CD14-positive monocyte (primary cell): ENCODE measurements at regions of chr20 and their contacts with region 1.

Region 1: GRCh38 chr20:62121776-62122631 is at the start of gene LSM14B:
- DNase-seq: peak; percentile 94 to 97 (median 96)
- H3K4me3 ChIP-seq: peak within 1 kb of the TSS; percentile 52 to 87 (median 71)
- H3K4me3 Mint-ChIP-seq: peak within 1 kb of the TSS; percentile 85 to 93
- H3K27ac ChIP-seq: peak within 1 kb of the TSS; percentile 65 to 94
- H3K27ac Mint-ChIP-seq: peak within 1 kb of the TSS; percentile 88 to 95 (median 93)
- H3K4me1 ChIP-seq: peaks cover 17 to 27% of the 10 kb centered on the region in 2 donors
- H3K4me1 Mint-ChIP-seq: peaks cover 19% of the 10 kb centered on the region
- H3K27me3 ChIP-seq: peaks cover 0 to 5% of the 10 kb centered on the region in 2 donors
- H3K27me3 Mint-ChIP-seq: peaks cover 9 to 24% (median 18%) of the 10 kb centered on the region in 3 donors
- CTCF ChIP-seq: no peak
- polyA plus RNA-seq, gene LSM14B: 1.0 to 33.5 (median 1.4) TPM

Region 2: GRCh38 chr20:62065669-62066338 is 56.2 kb before region 1 on chr20 and contains the start of gene TAF4:
- intact Hi-C with region 1: loop called (anchors 1 kb)
- DNase-seq: peak; percentile 68 to 84 (median 79)
- H3K4me3 ChIP-seq: peak within 1 kb of the TSS; percentile 62 to 89 (median 89)
- H3K4me3 Mint-ChIP-seq: peak within 1 kb of the TSS; percentile 87 to 96
- H3K27ac ChIP-seq: peak within 1 kb of the TSS in 1 of 2 donors; percentile 68
- H3K27ac Mint-ChIP-seq: peak within 1 kb of the TSS in 6 of 7 donors; percentile 53 to 90 (median 80)
- H3K4me1 ChIP-seq: peaks cover 44 to 53% of the 10 kb centered on the region in 2 donors
- H3K4me1 Mint-ChIP-seq: peaks cover 49% of the 10 kb centered on the region
- H3K27me3 ChIP-seq: no peaks in the 10 kb centered on the region
- H3K27me3 Mint-ChIP-seq: peaks cover 4 to 21% (median 4%) of the 10 kb centered on the region in 3 donors
- CTCF ChIP-seq: no peak
- polyA plus RNA-seq, gene TAF4: 0.48 to 14.9 (median 0.99) TPM

Region 3: DNA sequence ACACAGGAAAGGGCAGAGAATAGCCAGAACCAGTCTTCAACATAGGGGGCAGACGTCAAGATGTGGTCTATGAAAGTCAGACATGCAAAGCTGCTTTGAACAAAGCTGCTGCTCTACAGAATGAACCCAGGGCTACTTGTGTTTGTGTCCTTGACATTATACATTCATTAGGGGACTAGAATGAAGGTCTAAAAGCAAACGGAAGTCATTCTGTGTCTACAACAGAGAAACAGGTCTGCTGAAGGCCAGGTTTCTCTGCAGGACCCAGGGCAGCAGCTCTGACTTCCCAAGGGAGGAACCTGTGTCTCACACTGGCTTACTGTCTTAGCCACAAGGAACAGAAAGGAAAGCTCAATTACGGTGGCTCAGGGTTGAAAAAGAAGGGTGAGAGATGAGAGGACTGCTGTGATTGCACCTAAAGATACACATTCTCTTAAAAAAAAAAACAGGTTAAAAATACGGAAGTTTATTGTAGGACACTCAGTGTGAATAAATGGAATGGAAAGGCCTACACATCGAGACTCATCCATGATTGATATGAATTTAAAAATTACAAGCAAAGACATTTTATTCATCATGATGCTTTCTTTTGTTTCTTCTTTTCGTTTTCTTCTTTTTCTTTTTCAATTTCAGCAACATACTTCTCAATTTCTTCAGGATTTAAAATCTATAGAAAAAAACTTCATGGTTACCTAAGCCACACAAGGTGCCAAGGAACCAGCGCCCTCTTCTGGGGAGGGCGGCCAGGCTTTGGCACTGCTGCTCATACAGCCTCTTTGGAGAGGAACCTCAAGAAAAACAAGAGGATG is 14.5 kb after region 1 on chr20:
- intact Hi-C with region 1: loop called (anchors 2 kb)
- DNase-seq: peak; percentile 57 to 66 (median 60)
- H3K4me3 ChIP-seq: no peak overlapping the region
- H3K4me3 Mint-ChIP-seq: no peak overlapping the region
- H3K27ac ChIP-seq: peak overlapping the region in 1 of 2 donors; percentile 80
- H3K27ac Mint-ChIP-seq: peak overlapping the region; percentile 51 to 85 (median 65)
- H3K4me1 ChIP-seq: peaks cover 48 to 53% of the 10 kb centered on the region in 2 donors
- H3K4me1 Mint-ChIP-seq: peaks cover 55% of the 10 kb centered on the region
- H3K27me3 ChIP-seq: no peaks in the 10 kb centered on the region
- H3K27me3 Mint-ChIP-seq: no peaks in the 10 kb centered on the region
- CTCF ChIP-seq: peak; percentile 78

Region 4: GRCh38 chr20:62182613-62183425 is 60.8 kb after region 1 on chr20 and contains the start of gene MTG2:
- intact Hi-C with region 1: loop called in 1 of 2 experiments (anchors 5 kb)
- DNase-seq: peak; percentile 96 to 97 (median 96)
- H3K4me3 ChIP-seq: peak within 1 kb of the TSS; percentile 77 to 99 (median 84)
- H3K4me3 Mint-ChIP-seq: peak within 1 kb of the TSS; percentile 87 to 91
- H3K27ac ChIP-seq: peak within 1 kb of the TSS; percentile 57 to 92
- H3K27ac Mint-ChIP-seq: peak within 1 kb of the TSS; percentile 89 to 96 (median 93)
- H3K4me1 ChIP-seq: peaks cover 20 to 31% of the 10 kb centered on the region in 2 donors
- H3K4me1 Mint-ChIP-seq: peaks cover 43% of the 10 kb centered on the region
- H3K27me3 ChIP-seq: no peaks in the 10 kb centered on the region
- H3K27me3 Mint-ChIP-seq: peaks cover 0 to 2% (median 0%) of the 10 kb centered on the region in 3 donors
- CTCF ChIP-seq: no peak
- polyA plus RNA-seq, gene MTG2: 10.8 to 16.1 (median 14.9) TPM